ENCODE measurements at regions of chr18 and their contacts with region 1.

Region 1: DNA sequence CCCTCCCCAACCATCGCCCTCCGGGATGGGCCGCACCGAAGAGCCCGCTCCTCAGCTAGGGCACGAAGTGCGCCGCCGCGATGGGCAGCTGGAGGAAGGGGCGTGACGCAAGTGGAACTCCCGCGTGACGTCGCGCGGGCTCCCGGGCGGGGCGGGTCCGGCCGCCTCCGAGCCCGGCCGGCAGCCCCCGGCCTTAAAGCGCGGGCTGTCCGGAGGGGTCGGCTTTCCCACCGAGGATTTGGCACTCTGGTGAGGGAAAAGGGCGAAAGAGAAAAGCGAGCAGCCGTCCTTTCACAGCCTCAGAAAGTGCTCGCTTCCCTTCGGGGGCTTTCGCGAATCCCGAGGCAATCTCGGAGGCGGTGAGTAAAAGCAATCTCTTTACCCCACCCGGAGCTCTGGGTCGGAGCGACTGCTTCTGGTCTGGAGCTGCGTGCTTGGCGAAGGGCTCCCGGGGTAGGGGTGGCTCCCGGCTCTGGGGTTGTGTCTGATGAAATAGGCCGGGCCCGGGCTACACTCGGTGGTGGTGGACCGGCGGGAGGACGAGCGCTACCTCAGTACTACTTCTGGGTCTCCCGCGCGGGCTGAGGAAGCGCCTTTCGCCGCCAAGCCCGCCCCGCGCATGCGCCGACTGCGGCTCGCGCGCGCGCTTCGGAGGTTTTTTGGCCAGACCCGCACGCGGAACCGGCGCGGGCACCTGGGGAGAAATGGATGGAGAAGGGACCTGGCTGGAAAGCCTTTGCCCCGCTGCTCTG is at the start of gene RBBP8:
- DNase-seq: peak; percentile 85
- H3K4me3 Mint-ChIP-seq: peak within 1 kb of the TSS; percentile 95
- H3K27ac Mint-ChIP-seq: peak within 1 kb of the TSS; percentile 76
- H3K4me1 Mint-ChIP-seq: peaks cover 18% of the 10 kb centered on the region
- H3K27me3 Mint-ChIP-seq: no peaks in the 10 kb centered on the region
- CTCF ChIP-seq: no peak
- total RNA-seq, gene RBBP8: 42.0 and 59.7 TPM in 2 replicates

Region 2: GRCh38 chr18:22831441-22831904 is 101.9 kb before region 1 on chr18:
- CTCF ChIA-PET with region 1: interaction called, 5 read pairs
- POLR2A ChIA-PET with region 1: interaction called, 13 read pairs
- intact Hi-C with region 1: loop called (anchors 5 kb)
- DNase-seq: peak; percentile 97
- H3K4me3 Mint-ChIP-seq: no peak overlapping the region
- H3K27ac Mint-ChIP-seq: no peak overlapping the region
- H3K4me1 Mint-ChIP-seq: peaks cover 30% of the 10 kb centered on the region
- H3K27me3 Mint-ChIP-seq: no peaks in the 10 kb centered on the region
- CTCF ChIP-seq: no peak

Region 3: GRCh38 chr18:22856870-22857269 is 76.5 kb before region 1 on chr18:
- CTCF ChIA-PET with region 1: interaction called, 8 read pairs
- POLR2A ChIA-PET with region 1: interaction called, 31 read pairs
- intact Hi-C with region 1: no loop called
- DNase-seq: peak; percentile 67
- H3K4me3 Mint-ChIP-seq: no peak overlapping the region
- H3K27ac Mint-ChIP-seq: peak overlapping the region; percentile 79
- H3K4me1 Mint-ChIP-seq: peaks cover 10% of the 10 kb centered on the region
- H3K27me3 Mint-ChIP-seq: no peaks in the 10 kb centered on the region
- CTCF ChIP-seq: no peak

Region 4: GRCh38 chr18:22946846-22947245 is 13.5 kb after region 1 on chr18:
- CTCF ChIA-PET with region 1: interaction called, 5 read pairs
- POLR2A ChIA-PET with region 1: interaction called, 20 read pairs
- intact Hi-C with region 1: no loop called
- DNase-seq: no peak
- H3K4me3 Mint-ChIP-seq: no peak overlapping the region
- H3K27ac Mint-ChIP-seq: peak overlapping the region; percentile 16
- H3K4me1 Mint-ChIP-seq: no peaks in the 10 kb centered on the region
- H3K27me3 Mint-ChIP-seq: no peaks in the 10 kb centered on the region
- CTCF ChIP-seq: no peak

Region 5: GRCh38 chr18:22983175-22983574 is 49.8 kb after region 1 on chr18:
- CTCF ChIA-PET with region 1: interaction called, 20 read pairs
- POLR2A ChIA-PET with region 1: interaction called, 34 read pairs
- intact Hi-C with region 1: loop called (anchors 1 kb)
- DNase-seq: peak; percentile 48
- H3K4me3 Mint-ChIP-seq: no peak overlapping the region
- H3K27ac Mint-ChIP-seq: no peak overlapping the region
- H3K4me1 Mint-ChIP-seq: peaks cover 13% of the 10 kb centered on the region
- H3K27me3 Mint-ChIP-seq: no peaks in the 10 kb centered on the region
- CTCF ChIP-seq: peak; percentile 40

Region 6: DNA sequence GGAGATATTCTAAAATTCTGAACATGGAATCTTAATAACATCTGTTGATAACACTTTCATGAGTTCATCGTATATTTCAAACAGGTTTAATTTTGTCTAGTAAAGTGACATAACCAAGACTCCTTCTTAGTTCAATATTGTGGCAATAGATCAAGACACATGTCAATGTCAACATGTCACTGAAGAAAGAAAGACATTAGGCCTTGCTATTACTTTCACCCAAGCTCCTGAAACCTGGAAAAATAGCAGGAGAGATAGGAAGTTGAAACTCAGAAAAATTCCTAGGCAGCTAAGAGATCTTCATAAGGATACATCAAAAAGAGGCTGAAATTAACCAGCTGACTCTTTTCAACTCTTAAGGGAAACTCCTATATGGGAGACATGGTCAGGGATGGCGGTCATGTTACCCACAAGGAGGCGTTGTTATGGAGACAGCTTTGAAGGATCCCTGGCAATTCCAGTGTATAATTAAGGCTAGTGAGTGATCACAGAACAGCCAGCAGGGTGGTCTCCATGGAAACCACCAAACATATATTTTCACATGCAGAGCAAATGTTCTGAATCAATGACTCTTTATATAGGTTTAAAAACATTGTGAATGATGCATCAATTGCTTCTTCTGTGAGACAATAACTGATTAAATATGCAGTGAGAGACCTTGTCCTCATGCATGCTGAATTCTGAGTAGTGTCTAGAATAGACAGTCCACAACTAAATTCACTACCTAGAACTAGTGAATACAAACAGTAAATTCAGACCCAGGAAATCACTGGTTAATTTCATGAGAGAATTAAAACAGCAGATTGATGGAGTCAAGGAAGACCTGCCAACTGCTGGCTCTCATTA is 404.4 kb after region 1 on chr18:
- CTCF ChIA-PET with region 1: no interaction called
- POLR2A ChIA-PET with region 1: no interaction called
- intact Hi-C with region 1: no loop called
- DNase-seq: no peak
- H3K4me3 Mint-ChIP-seq: no peak overlapping the region
- H3K27ac Mint-ChIP-seq: no peak overlapping the region
- H3K4me1 Mint-ChIP-seq: peaks cover 7% of the 10 kb centered on the region
- H3K27me3 Mint-ChIP-seq: no peaks in the 10 kb centered on the region
- CTCF ChIP-seq: no peak